ENCODE measurements at regions of chr11 and their contacts with region 1.

Region 1: GRCh38 chr11:61899146-61899841 is 7.9 kb upstream of the FADS3 start:
- DNase-seq: peak; percentile 87 to 96
- ATAC-seq: peak; percentile 72 to 92
- H3K4me3 ChIP-seq: no peak overlapping the region
- H3K27ac ChIP-seq: peak overlapping the region; percentile 66 to 82; a peak in 5 of 6 replicates
- H3K4me1 ChIP-seq: peaks cover 19% of the 10 kb centered on the region
- CTCF ChIP-seq: peak; percentile 97
- EP300 ChIP-seq: no peak
- POLR2A ChIP-seq: no peak
- RAD21 ChIP-seq: peak; percentile 92 to 93

Region 2: GRCh38 chr11:61792310-61793085 is 106.8 kb before region 1 on chr11 and contains the starts of genes FEN1 and TMEM258:
- CTCF ChIA-PET with region 1: interaction called, 107 read pairs
- POLR2A ChIA-PET with region 1: no interaction called
- DNase-seq: peak; percentile 92 to 95
- ATAC-seq: peak; percentile 84 to 90
- H3K4me3 ChIP-seq: peak within 1 kb of the TSS; percentile 56
- H3K27ac ChIP-seq: peak within 1 kb of the TSS; percentile 92 to 100
- H3K4me1 ChIP-seq: peaks cover 24% of the 10 kb centered on the region; the same call in 1 of the 3 replicates
- CTCF ChIP-seq: no peak
- EP300 ChIP-seq: no peak
- POLR2A ChIP-seq: peak; percentile 79
- RAD21 ChIP-seq: no peak
- polyA plus RNA-seq, gene FEN1: 36.3 and 38.4 TPM in 2 replicates
- polyA plus RNA-seq, gene TMEM258: 280 and 375 TPM in 2 replicates

Region 3: GRCh38 chr11:61871158-61871597 is 28.1 kb before region 1 on chr11:
- CTCF ChIA-PET with region 1: interaction called, 220 read pairs
- POLR2A ChIA-PET with region 1: no interaction called
- DNase-seq: peak; percentile 82 to 91
- ATAC-seq: peak; percentile 80 to 93
- H3K4me3 ChIP-seq: no peak overlapping the region
- H3K27ac ChIP-seq: peak overlapping the region; percentile 47 to 52; a peak in 5 of 6 replicates
- H3K4me1 ChIP-seq: peaks cover 31% of the 10 kb centered on the region
- CTCF ChIP-seq: peak; percentile 95
- EP300 ChIP-seq: no peak
- POLR2A ChIP-seq: no peak
- RAD21 ChIP-seq: peak; percentile 95 to 97

Region 4: GRCh38 chr11:61940466-61940865 is 41.2 kb after region 1 on chr11:
- CTCF ChIA-PET with region 1: interaction called, 565 read pairs
- POLR2A ChIA-PET with region 1: no interaction called
- DNase-seq: no peak
- ATAC-seq: no peak
- H3K4me3 ChIP-seq: no peak overlapping the region
- H3K27ac ChIP-seq: no peak overlapping the region
- H3K4me1 ChIP-seq: no peaks in the 10 kb centered on the region
- CTCF ChIP-seq: no peak
- EP300 ChIP-seq: no peak
- POLR2A ChIP-seq: no peak
- RAD21 ChIP-seq: no peak

Region 5: GRCh38 chr11:61985885-61986345 is 86.6 kb after region 1 on chr11:
- CTCF ChIA-PET with region 1: interaction called, 15 read pairs
- POLR2A ChIA-PET with region 1: no interaction called
- DNase-seq: no peak
- ATAC-seq: no peak
- H3K4me3 ChIP-seq: no peak overlapping the region
- H3K27ac ChIP-seq: no peak overlapping the region
- H3K4me1 ChIP-seq: peaks cover 6% of the 10 kb centered on the region
- CTCF ChIP-seq: no peak
- EP300 ChIP-seq: no peak
- POLR2A ChIP-seq: no peak
- RAD21 ChIP-seq: no peak

Region 6: DNA sequence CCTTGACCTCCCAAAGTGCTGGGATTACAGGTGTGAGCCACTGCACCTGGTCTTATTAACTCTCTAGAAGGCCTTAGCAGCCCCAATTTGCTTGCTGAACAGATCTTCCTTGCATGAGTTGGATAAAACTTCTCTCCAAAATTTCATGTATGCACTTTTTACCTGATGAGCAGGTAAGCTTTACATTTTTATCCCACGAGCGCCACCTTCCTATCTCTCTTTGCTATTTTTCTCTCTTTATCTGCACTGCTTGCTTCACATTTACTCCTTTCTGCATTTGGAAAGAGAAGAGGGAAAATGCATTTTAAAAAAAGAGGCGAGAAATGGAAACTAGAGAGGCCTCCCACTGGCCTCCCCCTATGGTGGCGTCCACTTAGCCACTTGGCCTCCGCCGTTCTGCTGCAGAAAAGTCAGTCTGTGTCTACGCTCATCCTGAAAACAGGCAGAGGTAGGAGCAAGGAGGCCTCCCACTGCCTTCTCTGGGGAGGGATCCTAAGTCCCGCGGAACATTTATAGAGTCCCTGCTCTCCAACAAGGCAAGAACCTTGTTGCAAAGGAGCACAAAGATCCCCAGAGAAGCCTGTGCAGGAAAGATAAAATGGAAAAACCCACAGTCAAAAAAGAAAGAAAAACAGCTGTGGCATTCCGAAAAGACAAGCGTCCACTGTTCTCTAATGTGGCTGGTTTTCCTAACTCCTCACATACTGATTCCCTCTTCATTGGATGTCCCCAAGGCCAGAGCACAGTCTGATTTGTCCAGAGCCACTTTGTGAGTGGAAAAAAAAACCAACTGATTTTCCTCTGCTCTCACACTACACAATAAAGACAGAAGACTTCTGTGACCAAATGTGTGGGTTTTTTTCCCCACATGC is 162.3 kb after region 1 on chr11:
- CTCF ChIA-PET with region 1: interaction called, 101 read pairs
- POLR2A ChIA-PET with region 1: no interaction called
- DNase-seq: no peak
- ATAC-seq: no peak
- H3K4me3 ChIP-seq: no peak overlapping the region
- H3K27ac ChIP-seq: no peak overlapping the region
- H3K4me1 ChIP-seq: no peaks in the 10 kb centered on the region
- CTCF ChIP-seq: no peak
- EP300 ChIP-seq: no peak
- POLR2A ChIP-seq: no peak
- RAD21 ChIP-seq: no peak

Region 7: DNA sequence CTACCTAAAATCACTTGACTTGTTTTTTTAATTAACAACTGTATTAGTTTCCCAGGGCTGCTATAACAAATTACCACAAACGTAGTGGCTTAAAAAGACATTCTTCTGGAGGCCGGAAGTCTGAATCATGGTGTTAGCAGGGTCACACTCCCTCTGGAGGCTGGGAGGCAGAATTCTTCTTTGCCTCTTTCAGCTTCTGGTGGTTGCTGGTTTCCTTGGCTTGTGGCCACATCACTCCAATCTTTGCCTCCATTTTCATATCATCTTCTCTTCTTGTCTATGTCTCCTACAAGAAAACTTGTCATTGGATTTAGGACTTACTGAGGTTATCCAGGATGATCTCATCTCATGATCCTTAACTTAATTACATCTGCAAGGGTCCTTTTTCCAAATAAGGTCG is 217.2 kb after region 1 on chr11:
- CTCF ChIA-PET with region 1: interaction called, 215 read pairs
- POLR2A ChIA-PET with region 1: no interaction called
- DNase-seq: peak in 1 of 2 experiments; percentile 35
- ATAC-seq: no peak
- H3K4me3 ChIP-seq: no peak overlapping the region
- H3K27ac ChIP-seq: no peak overlapping the region
- H3K4me1 ChIP-seq: no peaks in the 10 kb centered on the region
- CTCF ChIP-seq: no peak
- EP300 ChIP-seq: no peak
- POLR2A ChIP-seq: no peak
- RAD21 ChIP-seq: no peak

Measured in A549 (cell line).